A549 (cell line): ENCODE measurements at regions of chr17 and their contacts with region 1.

Region 1: GRCh38 chr17:80866147-80866793 is 125.4 kb upstream of the CHMP6 start:
- DNase-seq: peak; percentile 62 to 84
- ATAC-seq: peak; percentile 82 to 91; a peak in 5 of 6 replicates
- H3K4me3 ChIP-seq: no peak overlapping the region
- H3K27ac ChIP-seq: no peak overlapping the region
- H3K4me1 ChIP-seq: no peaks in the 10 kb centered on the region
- CTCF ChIP-seq: peak; percentile 71
- EP300 ChIP-seq: no peak
- POLR2A ChIP-seq: no peak
- RAD21 ChIP-seq: peak; percentile 62 to 74

Region 2: GRCh38 chr17:80832888-80833583 is 33.2 kb before region 1 on chr17:
- CTCF ChIA-PET with region 1: interaction called, 12 read pairs
- POLR2A ChIA-PET with region 1: no interaction called
- DNase-seq: peak; percentile 92 to 99
- ATAC-seq: peak; percentile 92 to 97
- H3K4me3 ChIP-seq: peak overlapping the region; percentile 35
- H3K27ac ChIP-seq: peak overlapping the region; percentile 68 to 85
- H3K4me1 ChIP-seq: peaks cover 19% of the 10 kb centered on the region
- CTCF ChIP-seq: no peak
- EP300 ChIP-seq: no peak
- POLR2A ChIP-seq: no peak; the same call in 1 of the 2 replicates
- RAD21 ChIP-seq: peak; percentile 15 to 38; a peak in 4 of 5 replicates

Region 3: GRCh38 chr17:80850817-80851216 is 15.5 kb before region 1 on chr17:
- CTCF ChIA-PET with region 1: interaction called, 19 read pairs
- POLR2A ChIA-PET with region 1: no interaction called
- DNase-seq: no peak
- ATAC-seq: no peak
- H3K4me3 ChIP-seq: no peak overlapping the region
- H3K27ac ChIP-seq: no peak overlapping the region
- H3K4me1 ChIP-seq: peaks cover 14% of the 10 kb centered on the region
- CTCF ChIP-seq: no peak
- EP300 ChIP-seq: no peak
- POLR2A ChIP-seq: no peak
- RAD21 ChIP-seq: no peak

Region 4: DNA sequence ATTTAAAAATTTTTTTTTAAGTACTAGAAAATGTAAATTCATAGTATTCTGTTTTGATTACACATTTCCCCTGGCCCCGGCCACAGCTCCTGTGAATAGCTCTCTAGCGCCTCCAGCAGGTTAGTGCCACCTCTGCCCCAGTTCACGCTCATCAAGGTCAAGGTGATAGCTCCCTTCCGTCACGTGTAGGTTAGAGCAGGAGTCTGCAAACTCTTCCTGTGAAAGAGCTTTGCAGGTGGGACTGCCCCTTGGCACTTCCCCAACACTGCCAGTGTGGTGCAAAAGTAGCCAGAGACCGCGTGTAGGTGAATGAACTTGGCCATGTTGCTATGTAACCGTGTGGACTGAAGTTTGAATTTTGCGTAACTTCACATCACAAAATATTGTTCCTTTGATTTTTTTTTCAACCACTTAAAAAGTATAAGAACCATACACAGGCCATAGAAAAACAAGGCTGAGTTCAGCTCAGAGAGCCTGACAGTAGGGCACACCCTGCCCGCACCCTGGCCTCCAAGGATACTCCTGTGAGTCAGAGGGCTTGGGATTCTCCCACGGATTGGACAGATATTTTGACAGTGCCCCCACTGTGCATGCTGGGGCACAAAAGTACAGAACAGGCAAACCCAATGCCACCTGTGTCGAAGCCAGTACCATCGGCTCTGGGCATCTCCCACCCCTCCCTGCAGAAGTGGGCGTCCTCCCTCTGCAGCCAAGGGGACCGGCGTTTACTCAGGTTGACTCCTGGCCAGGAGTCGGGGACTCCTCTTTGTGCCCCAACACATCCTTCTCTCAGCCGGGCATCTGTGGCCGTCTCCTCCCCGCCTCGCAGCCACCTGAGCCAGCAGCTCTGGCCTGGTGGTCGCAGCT is 33.4 kb after region 1 on chr17:
- CTCF ChIA-PET with region 1: interaction called, 11 read pairs
- POLR2A ChIA-PET with region 1: no interaction called
- DNase-seq: peak; percentile 60 to 70
- ATAC-seq: peak; percentile 69 to 80; a peak in 4 of 6 replicates
- H3K4me3 ChIP-seq: no peak overlapping the region
- H3K27ac ChIP-seq: no peak overlapping the region
- H3K4me1 ChIP-seq: no peaks in the 10 kb centered on the region
- CTCF ChIP-seq: peak; percentile 68
- EP300 ChIP-seq: no peak
- POLR2A ChIP-seq: no peak
- RAD21 ChIP-seq: peak; percentile 69 to 85